Mammary epithelial cell (primary cell): ENCODE measurements at regions of chr12 and their contacts with region 1.

Region 1: GRCh38 chr12:6867413-6868210 is at the start of gene TPI1:
- DNase-seq: peak; percentile 72
- H3K4me3 ChIP-seq: peak within 1 kb of the TSS; percentile 37 to 99 (median 85)
- H3K27ac ChIP-seq: peak within 1 kb of the TSS; percentile 81
- H3K4me1 ChIP-seq: peaks cover 42% of the 10 kb centered on the region
- H3K27me3 ChIP-seq: no peaks in the 10 kb centered on the region
- CTCF ChIP-seq: no peak
- total RNA-seq, gene TPI1: 407 to 974 TPM

Region 2: DNA sequence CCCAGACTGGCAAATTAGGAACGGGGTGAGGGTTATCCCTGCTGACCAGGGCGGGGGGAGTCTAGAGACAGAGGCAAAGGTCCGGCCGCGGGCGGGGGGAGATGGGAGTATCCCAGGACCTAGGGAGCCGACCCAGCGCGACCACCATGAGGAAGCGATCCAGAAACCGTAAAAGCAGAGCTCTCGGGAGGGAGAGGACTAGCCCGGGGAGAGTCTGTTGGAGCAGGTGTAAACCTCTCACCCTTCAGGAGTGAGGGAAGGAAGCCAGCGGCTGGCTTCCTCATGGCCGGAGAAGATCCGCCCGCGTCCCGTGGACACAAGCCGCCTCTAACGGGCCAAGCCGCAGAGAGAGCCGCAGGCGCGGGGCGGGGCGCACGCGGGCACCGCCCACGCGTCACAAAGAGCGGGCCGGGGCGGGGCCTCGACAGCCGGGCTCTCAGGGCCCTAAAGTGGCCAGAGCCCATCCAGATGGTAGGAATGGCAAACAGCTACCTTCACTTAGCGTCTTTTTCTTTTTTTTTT is 220.5 kb before region 1 on chr12 and contains the start of gene ACRBP:
- CTCF ChIA-PET with region 1: no interaction called
- dilution Hi-C with region 1: no loop called
- in situ Hi-C with region 1: no loop called
- intact Hi-C with region 1: no loop called
- DNase-seq: no peak
- H3K4me3 ChIP-seq: no peak within 1 kb of the TSS
- H3K27ac ChIP-seq: no peak within 1 kb of the TSS
- H3K4me1 ChIP-seq: no peaks in the 10 kb centered on the region
- H3K27me3 ChIP-seq: no peaks in the 10 kb centered on the region
- CTCF ChIP-seq: no peak
- total RNA-seq, gene ACRBP: not detected

Region 3: GRCh38 chr12:6752921-6753771 is 114.5 kb before region 1 on chr12 and contains the start of gene MLF2:
- CTCF ChIA-PET with region 1: no interaction called
- dilution Hi-C with region 1: no loop called
- in situ Hi-C with region 1: no loop called
- intact Hi-C with region 1: loop called (anchors 1 kb)
- DNase-seq: peak; percentile 98
- H3K4me3 ChIP-seq: peak within 1 kb of the TSS; percentile 49 to 99 (median 81)
- H3K27ac ChIP-seq: peak within 1 kb of the TSS; percentile 92
- H3K4me1 ChIP-seq: peaks cover 24% of the 10 kb centered on the region
- H3K27me3 ChIP-seq: no peaks in the 10 kb centered on the region
- CTCF ChIP-seq: peak; percentile 82 to 97
- total RNA-seq, gene MLF2: 233 to 294 TPM

Region 4: GRCh38 chr12:6818222-6818621 is 49.4 kb before region 1 on chr12:
- CTCF ChIA-PET with region 1: no interaction called
- dilution Hi-C with region 1: no loop called
- in situ Hi-C with region 1: no loop called
- intact Hi-C with region 1: no loop called
- DNase-seq: no peak
- H3K4me3 ChIP-seq: no peak overlapping the region
- H3K27ac ChIP-seq: no peak overlapping the region
- H3K4me1 ChIP-seq: peaks cover 3% of the 10 kb centered on the region
- H3K27me3 ChIP-seq: peaks cover 9% of the 10 kb centered on the region
- CTCF ChIP-seq: no peak

Region 5: DNA sequence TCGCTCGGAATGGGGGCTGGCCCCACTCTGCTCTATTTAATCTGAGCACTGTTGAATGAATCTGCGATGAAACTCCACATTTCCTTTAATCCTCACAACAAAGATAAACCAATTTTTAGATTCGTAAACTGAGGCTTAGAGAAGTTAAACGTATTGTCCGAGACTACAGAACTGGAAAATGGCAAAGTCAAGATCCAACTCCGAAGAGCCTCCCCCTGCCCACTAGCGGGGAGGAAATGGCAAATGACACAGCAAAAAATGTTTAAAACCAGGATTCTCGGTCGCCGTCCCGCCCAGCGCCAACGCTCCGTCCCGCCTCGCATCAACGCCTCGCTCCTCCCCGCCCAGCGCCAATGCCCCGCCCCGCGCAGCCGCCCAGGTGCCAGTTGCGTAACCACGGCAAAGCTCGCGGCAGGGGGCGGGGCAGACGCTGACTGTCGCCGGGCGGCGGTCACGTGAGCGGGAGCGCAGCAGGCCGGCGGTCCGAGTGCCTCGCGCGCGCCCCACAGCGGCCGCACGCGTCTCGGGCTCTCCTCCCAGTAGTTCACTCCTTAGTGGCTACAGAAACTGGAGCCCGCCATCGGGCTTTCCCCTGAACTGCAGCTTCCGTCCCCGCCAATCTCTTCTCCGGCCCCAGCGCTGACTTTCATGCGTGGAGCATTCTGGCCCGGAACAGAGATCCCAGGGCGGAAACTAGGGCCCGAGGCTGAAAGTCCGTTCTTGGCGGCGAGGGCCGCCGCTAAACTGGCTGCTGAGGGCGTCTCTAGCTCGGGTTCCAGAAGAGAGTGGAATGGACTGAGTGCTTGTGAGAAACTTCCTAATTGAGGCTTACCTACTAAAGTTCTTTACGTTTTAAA is 23.4 kb after region 1 on chr12:
- CTCF ChIA-PET with region 1: interaction called, 6 read pairs
- dilution Hi-C with region 1: no loop called
- in situ Hi-C with region 1: no loop called
- intact Hi-C with region 1: loop called (anchors 1 kb)
- DNase-seq: peak; percentile 94
- H3K4me3 ChIP-seq: peak overlapping the region; percentile 30 to 57 (median 35)
- H3K27ac ChIP-seq: peak overlapping the region; percentile 76
- H3K4me1 ChIP-seq: peaks cover 12% of the 10 kb centered on the region
- H3K27me3 ChIP-seq: no peaks in the 10 kb centered on the region
- CTCF ChIP-seq: peak; percentile 56 to 66

Region 6: GRCh38 chr12:6927379-6928024 is 59.9 kb after region 1 on chr12 and contains the start of gene ATN1:
- CTCF ChIA-PET with region 1: interaction called, 21 read pairs
- dilution Hi-C with region 1: no loop called
- in situ Hi-C with region 1: no loop called
- intact Hi-C with region 1: loop called (anchors 1 kb)
- DNase-seq: peak; percentile 48
- H3K4me3 ChIP-seq: peak within 1 kb of the TSS; percentile 82 to 85 (median 84)
- H3K27ac ChIP-seq: peak within 1 kb of the TSS; percentile 65
- H3K4me1 ChIP-seq: peaks cover 46% of the 10 kb centered on the region
- H3K27me3 ChIP-seq: no peaks in the 10 kb centered on the region
- CTCF ChIP-seq: no peak
- total RNA-seq, gene ATN1: 12.2 to 73.5 TPM

Region 7: GRCh38 chr12:6944381-6945186 is 77.0 kb after region 1 on chr12:
- CTCF ChIA-PET with region 1: interaction called, 7 read pairs
- dilution Hi-C with region 1: no loop called
- in situ Hi-C with region 1: no loop called
- intact Hi-C with region 1: loop called (anchors 1 kb)
- DNase-seq: no peak
- H3K4me3 ChIP-seq: peak overlapping the region; percentile 36 to 64 (median 47)
- H3K27ac ChIP-seq: peak overlapping the region; percentile 94
- H3K4me1 ChIP-seq: peaks cover 29% of the 10 kb centered on the region
- H3K27me3 ChIP-seq: no peaks in the 10 kb centered on the region
- CTCF ChIP-seq: peak; percentile 55 to 77

Region 8: GRCh38 chr12:7042842-7043241 is 175.2 kb after region 1 on chr12:
- CTCF ChIA-PET with region 1: no interaction called
- dilution Hi-C with region 1: no loop called
- in situ Hi-C with region 1: no loop called
- intact Hi-C with region 1: loop called (anchors 1 kb)
- DNase-seq: peak; percentile 52
- H3K4me3 ChIP-seq: no peak overlapping the region
- H3K27ac ChIP-seq: no peak overlapping the region
- H3K4me1 ChIP-seq: peaks cover 13% of the 10 kb centered on the region
- H3K27me3 ChIP-seq: no peaks in the 10 kb centered on the region
- CTCF ChIP-seq: peak; percentile 40 to 56